ENCODE measurements at regions of chr5 and their contacts with region 1.

Region 1: DNA sequence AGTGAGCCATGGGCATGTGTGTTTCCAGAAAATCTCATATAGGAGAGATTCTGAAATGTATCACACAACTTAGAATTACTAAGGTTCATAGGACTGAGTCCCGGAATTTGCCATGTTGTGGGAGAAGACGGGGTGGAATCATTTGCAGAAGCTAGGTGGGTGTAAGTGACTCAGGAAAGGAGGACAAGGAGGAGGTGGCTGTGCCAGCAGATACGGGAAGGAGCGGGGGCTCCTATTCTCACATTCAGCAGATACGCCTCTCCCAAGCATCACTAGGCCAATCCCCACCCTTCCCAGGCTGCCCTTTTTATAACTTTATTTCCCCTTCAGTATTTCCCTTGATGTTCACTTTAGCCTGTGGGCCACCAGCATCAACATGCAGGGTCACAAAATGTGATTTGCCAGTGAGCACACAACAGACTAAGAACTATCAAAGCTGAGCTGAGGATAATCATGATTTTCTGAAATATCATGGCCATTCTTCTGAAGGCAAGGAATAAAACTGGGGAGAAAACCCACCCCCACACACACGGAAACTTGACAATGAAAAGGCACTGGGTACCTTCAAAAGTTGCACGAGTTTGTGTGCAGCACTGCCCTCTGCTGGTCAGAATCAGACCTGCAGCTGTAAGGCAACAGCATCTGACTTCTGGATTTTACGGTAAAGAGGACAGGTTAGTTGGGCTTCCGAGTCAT is 133.2 kb downstream of the MTX3 start:
- DNase-seq: peak; percentile 47
- H3K4me3 ChIP-seq: peak overlapping the region in 1 of 2 experiments; percentile 19; a peak in 1 of 4 replicates
- H3K27ac ChIP-seq: no peak overlapping the region
- H3K4me1 ChIP-seq: no peaks in the 10 kb centered on the region; a peak in 1 of 4 replicates
- H3K27me3 ChIP-seq: no peaks in the 10 kb centered on the region; the same call in 1 of the 2 replicates
- CTCF ChIP-seq: peak; percentile 98
- EP300 ChIP-seq: no peak
- RAD21 ChIP-seq: peak; percentile 87

Region 2: GRCh38 chr5:79560771-79561524 is 296.9 kb before region 1 on chr5:
- CTCF ChIA-PET with region 1: interaction called, 17 read pairs
- POLR2A ChIA-PET with region 1: no interaction called
- DNase-seq: no peak
- H3K4me3 ChIP-seq: no peak overlapping the region
- H3K27ac ChIP-seq: peak overlapping the region in 1 of 2 experiments; percentile 64; a peak in 2 of 4 replicates
- H3K4me1 ChIP-seq: peaks cover 0 to 12% of the 10 kb centered on the region in 2 experiments; a peak in 2 of 4 replicates
- H3K27me3 ChIP-seq: no peaks in the 10 kb centered on the region
- CTCF ChIP-seq: no peak
- EP300 ChIP-seq: no peak
- RAD21 ChIP-seq: no peak

Region 3: GRCh38 chr5:79702606-79703382 is 155.1 kb before region 1 on chr5:
- CTCF ChIA-PET with region 1: interaction called, 21 read pairs
- POLR2A ChIA-PET with region 1: no interaction called
- DNase-seq: peak; percentile 62
- H3K4me3 ChIP-seq: no peak overlapping the region
- H3K27ac ChIP-seq: no peak overlapping the region
- H3K4me1 ChIP-seq: no peaks in the 10 kb centered on the region
- H3K27me3 ChIP-seq: no peaks in the 10 kb centered on the region
- CTCF ChIP-seq: peak; percentile 63
- EP300 ChIP-seq: no peak
- RAD21 ChIP-seq: peak; percentile 52

Region 4: DNA sequence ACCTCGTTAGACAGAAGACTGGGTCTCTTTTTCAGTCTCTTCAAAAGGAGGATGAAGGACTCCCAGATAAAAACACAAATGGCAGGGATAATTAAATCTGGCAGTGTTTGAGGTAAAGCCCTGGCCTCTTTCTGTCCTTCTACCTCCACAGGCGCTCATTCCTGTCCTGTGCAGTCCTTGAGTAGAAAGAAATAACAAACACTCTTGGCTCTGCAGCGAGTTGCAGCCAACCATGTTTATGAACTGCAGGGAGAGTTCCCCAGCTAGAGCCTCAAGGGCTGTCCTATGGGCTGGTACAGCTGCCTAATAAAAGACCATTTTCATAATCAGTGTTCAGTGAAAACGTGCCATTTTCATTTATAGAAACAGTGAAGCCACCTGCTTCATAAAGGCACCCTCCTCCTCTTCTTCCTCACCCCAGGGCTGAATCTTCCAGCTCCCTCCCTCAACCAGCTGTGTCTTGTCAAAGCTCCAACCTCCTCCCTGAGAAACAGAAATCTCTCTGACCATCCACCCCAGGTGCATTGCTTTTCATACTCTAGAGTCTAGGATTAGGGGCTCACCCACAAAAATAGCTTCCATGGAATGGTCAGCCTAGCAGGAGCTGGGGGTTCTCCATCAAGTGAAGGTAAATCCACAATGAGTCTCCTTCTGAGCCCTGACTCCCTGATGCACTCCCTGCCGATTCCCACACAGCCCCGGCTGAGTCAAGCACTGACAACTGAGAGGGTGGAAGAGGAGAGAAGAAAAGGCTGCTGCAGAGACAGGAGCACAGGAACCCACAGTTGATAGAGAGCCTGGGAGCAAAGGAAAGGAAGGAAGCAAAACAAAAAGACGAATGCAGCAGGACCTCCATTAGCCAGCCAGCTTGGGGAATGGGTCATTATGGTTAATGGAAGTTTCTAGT is 17.5 kb before region 1 on chr5:
- CTCF ChIA-PET with region 1: interaction called, 17 read pairs
- POLR2A ChIA-PET with region 1: no interaction called
- DNase-seq: no peak
- H3K4me3 ChIP-seq: no peak overlapping the region
- H3K27ac ChIP-seq: no peak overlapping the region
- H3K4me1 ChIP-seq: no peaks in the 10 kb centered on the region; a peak in 1 of 4 replicates
- H3K27me3 ChIP-seq: peaks cover 4% of the 10 kb centered on the region; the same call in 1 of the 2 replicates
- CTCF ChIP-seq: no peak
- EP300 ChIP-seq: no peak
- RAD21 ChIP-seq: no peak

Region 5: DNA sequence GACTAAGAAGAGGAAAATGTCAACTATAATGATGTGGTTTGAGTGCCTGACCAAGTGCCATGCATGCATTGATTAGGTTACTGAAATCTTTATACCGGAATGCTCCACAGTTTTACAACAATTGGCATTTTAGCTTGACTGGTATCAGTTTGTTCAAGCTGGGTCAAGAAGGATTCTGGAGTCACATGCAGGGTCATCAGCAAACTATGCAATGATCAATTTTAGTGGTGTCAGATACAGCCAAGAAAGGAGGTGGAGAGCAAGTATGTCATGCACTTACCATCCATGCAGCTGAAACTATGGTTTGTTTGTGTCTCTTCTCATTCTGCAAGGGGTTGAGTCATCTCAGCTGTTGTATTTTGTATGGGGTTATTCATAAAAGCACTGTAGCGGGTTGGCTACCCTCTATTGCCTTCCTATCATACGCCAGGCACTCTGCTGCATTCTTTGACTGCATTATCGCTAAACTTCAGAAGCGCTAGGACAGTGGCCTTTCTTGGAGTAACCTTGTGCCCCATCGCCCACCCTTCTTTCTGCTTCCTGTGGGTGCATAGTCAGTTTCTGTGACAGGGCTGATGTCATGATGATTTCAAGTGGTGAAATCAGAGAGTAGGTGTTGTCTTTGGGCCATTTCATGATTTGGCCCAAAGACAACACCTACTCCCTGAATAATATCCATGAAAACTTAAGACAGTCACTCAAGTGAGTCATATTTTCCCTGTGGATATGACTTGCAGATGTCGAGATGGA is 12.2 kb before region 1 on chr5:
- CTCF ChIA-PET with region 1: interaction called, 17 read pairs
- POLR2A ChIA-PET with region 1: no interaction called
- DNase-seq: no peak
- H3K4me3 ChIP-seq: no peak overlapping the region
- H3K27ac ChIP-seq: 0 out of 4 replicates have a peak overlapping the region, but pooled peaks of 1 of the 2 experiments have one; percentile 7
- H3K4me1 ChIP-seq: no peaks in the 10 kb centered on the region; a peak in 1 of 4 replicates
- H3K27me3 ChIP-seq: no peaks in the 10 kb centered on the region
- CTCF ChIP-seq: no peak
- EP300 ChIP-seq: no peak
- RAD21 ChIP-seq: no peak

Region 6: DNA sequence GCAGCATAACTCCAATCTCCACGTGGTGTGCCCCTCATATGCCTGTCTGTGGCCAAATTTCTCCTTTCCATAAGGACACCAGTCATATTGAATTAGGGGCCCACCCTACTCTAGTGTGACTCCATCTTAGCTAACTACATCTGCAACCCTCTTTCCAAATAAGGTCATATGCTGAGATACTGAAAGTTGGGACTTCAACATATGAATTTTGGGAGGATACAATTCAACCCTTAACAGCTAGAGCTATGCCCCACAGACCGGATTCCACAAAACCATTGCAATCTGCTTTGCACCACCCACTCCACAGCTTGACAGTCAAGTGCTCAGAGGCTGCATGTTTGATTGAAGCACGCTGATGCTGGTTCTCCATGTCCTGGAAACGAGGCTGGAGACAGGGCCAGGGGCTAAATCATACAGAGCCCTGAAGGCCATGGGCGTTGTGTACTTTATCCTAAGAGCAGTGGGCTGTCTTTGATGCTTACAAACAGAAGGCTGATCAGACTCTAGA is 10.4 kb after region 1 on chr5:
- CTCF ChIA-PET with region 1: interaction called, 13 read pairs
- POLR2A ChIA-PET with region 1: no interaction called
- DNase-seq: no peak
- H3K4me3 ChIP-seq: no peak overlapping the region
- H3K27ac ChIP-seq: no peak overlapping the region
- H3K4me1 ChIP-seq: no peaks in the 10 kb centered on the region
- H3K27me3 ChIP-seq: no peaks in the 10 kb centered on the region
- CTCF ChIP-seq: no peak
- EP300 ChIP-seq: no peak
- RAD21 ChIP-seq: no peak

Region 7: DNA sequence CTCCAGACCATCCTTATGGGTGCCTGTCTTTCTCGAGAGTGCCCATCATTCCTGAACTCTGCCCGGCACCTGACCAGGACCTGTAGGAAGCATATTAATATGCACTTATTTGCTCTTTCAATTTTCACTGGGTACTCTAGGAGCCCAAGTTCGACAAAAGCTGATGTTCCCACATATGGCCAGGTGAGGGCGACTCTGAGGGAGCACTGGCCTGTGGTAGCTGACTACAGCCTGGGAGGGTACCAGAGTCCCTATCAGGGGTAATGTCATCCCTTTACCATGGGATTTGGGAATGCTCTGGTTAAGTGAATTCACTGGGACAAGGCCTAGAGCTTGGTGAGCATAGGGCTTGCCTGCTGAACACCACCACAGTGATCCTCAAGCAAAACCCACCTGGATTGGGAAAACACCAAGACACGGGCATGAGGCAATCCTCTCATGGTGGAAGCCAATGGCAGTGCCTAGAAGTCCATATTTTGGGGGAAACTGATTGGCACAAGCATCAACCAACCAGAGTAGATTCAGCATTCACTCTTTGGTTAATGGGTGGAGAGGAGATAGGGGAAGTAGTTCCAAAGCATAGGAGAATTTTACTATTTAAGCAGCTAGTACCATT is 21.0 kb after region 1 on chr5:
- CTCF ChIA-PET with region 1: interaction called, 10 read pairs
- POLR2A ChIA-PET with region 1: no interaction called
- DNase-seq: peak; percentile 32
- H3K4me3 ChIP-seq: no peak overlapping the region
- H3K27ac ChIP-seq: no peak overlapping the region
- H3K4me1 ChIP-seq: peaks cover 0 to 2% of the 10 kb centered on the region in 2 experiments; a peak in 2 of 4 replicates
- H3K27me3 ChIP-seq: no peaks in the 10 kb centered on the region; the same call in 1 of the 2 replicates
- CTCF ChIP-seq: peak; percentile 50
- EP300 ChIP-seq: no peak
- RAD21 ChIP-seq: no peak

Measured in SK-N-SH (cell line).